ENCODE measurements at regions of chr9 and their contacts with region 1.

Region 1: DNA sequence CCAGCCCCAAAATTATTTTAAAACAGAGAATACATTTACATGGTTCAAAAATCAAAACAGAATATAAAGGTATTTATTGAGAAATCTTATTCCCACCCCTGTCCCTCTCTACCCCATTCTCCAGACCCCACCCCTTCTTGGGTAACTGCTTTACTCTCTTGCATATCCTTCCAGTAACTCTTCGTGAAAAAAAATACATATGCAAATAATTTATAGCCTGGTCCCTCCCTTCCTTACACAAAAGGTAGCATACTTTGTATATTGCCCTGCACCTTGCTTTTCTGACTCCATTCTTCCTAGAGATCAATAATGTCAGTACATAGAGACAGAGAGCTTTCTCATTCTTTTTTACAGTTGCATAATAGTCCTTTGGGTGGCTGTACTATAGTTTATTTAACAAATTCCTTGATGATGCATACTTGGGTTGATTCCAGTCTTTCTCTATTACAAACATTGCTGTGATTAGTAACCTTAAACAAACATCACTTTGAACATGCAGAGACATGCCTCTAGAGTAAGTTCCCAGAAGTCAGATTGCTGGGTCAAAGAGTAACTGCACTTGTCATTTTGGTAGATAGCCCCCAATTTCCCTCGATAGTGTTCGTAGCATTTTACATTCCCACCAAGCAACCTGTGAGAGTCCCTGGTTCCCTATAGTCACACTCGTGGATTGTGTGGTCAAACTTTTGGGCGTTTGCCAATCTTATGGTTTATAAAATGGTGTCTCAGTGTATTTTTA is 47.8 kb downstream of the STOM start:
- DNase-seq: peak in 2 of 9 experiments; percentile 13 to 18
- ATAC-seq: no peak
- H3K4me3 ChIP-seq: no peak overlapping the region
- H3K4me3 Mint-ChIP-seq: no peak overlapping the region
- H3K27ac ChIP-seq: no peak overlapping the region
- H3K27ac Mint-ChIP-seq: no peak overlapping the region
- H3K4me1 ChIP-seq: peaks cover 7% of the 10 kb centered on the region
- H3K4me1 Mint-ChIP-seq: peaks cover 21% of the 10 kb centered on the region
- H3K27me3 ChIP-seq: no peaks in the 10 kb centered on the region
- H3K27me3 Mint-ChIP-seq: no peaks in the 10 kb centered on the region
- CTCF ChIP-seq: no peak

Region 2: GRCh38 chr9:121133149-121133816 is 188.9 kb before region 1 on chr9:
- CTCF ChIA-PET with region 1: no interaction called
- POLR2A ChIA-PET with region 1: no interaction called
- intact Hi-C with region 1: no loop called
- DNase-seq: peak; percentile 62 to 91 (median 78)
- ATAC-seq: peak; percentile 99
- H3K4me3 ChIP-seq: peak overlapping the region; percentile 23 to 27
- H3K4me3 Mint-ChIP-seq: peak overlapping the region; percentile 65
- H3K27ac ChIP-seq: peak overlapping the region; percentile 4 to 64
- H3K27ac Mint-ChIP-seq: peak overlapping the region; percentile 85
- H3K4me1 ChIP-seq: peaks cover 20% of the 10 kb centered on the region
- H3K4me1 Mint-ChIP-seq: peaks cover 73% of the 10 kb centered on the region
- H3K27me3 ChIP-seq: no peaks in the 10 kb centered on the region
- H3K27me3 Mint-ChIP-seq: no peaks in the 10 kb centered on the region
- CTCF ChIP-seq: no peak

Region 3: GRCh38 chr9:121201738-121202533 is 120.3 kb before region 1 on chr9 and contains the start of gene RAB14:
- CTCF ChIA-PET with region 1: no interaction called
- POLR2A ChIA-PET with region 1: no interaction called
- intact Hi-C with region 1: no loop called
- DNase-seq: peak; percentile 100
- ATAC-seq: peak; percentile 90
- H3K4me3 ChIP-seq: peak within 1 kb of the TSS; percentile 77 to 79
- H3K4me3 Mint-ChIP-seq: peak within 1 kb of the TSS; percentile 96
- H3K27ac ChIP-seq: peak within 1 kb of the TSS; percentile 79 to 82
- H3K27ac Mint-ChIP-seq: peak within 1 kb of the TSS; percentile 97
- H3K4me1 ChIP-seq: peaks cover 41% of the 10 kb centered on the region
- H3K4me1 Mint-ChIP-seq: peaks cover 53% of the 10 kb centered on the region
- H3K27me3 ChIP-seq: no peaks in the 10 kb centered on the region
- H3K27me3 Mint-ChIP-seq: no peaks in the 10 kb centered on the region
- CTCF ChIP-seq: no peak
- total RNA-seq, gene RAB14: 58.8 to 60.4 TPM

Region 4: DNA sequence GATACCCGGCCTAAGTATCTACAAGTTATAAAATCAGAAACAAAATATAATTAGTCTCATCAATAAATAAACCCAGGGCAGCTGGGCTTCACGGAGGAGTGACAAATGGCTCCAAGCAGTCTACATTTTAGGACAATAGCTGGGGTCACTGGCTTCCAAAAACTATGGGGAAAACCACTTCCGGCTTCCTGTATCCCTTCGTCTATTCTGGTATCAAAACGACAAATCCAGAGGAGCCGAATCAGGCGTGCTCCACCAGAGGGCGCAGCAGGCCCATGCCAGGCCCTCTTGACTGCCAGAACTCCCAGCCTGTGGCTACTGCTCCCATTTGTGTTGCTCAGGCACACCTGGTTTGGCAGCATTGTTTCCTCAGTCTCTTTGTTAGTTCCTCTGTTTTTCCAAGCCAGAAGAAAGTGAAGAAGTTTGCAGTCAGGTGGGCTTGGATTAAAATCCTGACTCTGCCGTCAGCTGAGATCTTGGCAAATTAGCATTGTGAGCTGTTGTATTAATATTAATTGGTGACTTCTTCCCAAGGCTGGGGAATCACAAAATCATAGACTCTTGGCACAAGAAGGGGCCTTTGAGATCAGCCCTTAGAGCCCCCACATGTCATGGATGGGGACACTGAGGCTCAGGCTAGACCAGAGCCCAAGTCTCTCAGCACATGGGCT is 108.9 kb before region 1 on chr9:
- CTCF ChIA-PET with region 1: interaction called, 11 read pairs
- POLR2A ChIA-PET with region 1: no interaction called
- intact Hi-C with region 1: no loop called
- DNase-seq: peak; percentile 27 to 75 (median 62)
- ATAC-seq: peak; percentile 52
- H3K4me3 ChIP-seq: no peak overlapping the region
- H3K4me3 Mint-ChIP-seq: no peak overlapping the region
- H3K27ac ChIP-seq: no peak overlapping the region
- H3K27ac Mint-ChIP-seq: no peak overlapping the region
- H3K4me1 ChIP-seq: no peaks in the 10 kb centered on the region
- H3K4me1 Mint-ChIP-seq: peaks cover 5% of the 10 kb centered on the region
- H3K27me3 ChIP-seq: no peaks in the 10 kb centered on the region
- H3K27me3 Mint-ChIP-seq: no peaks in the 10 kb centered on the region
- CTCF ChIP-seq: peak; percentile 89

Region 5: GRCh38 chr9:121305269-121305994 is 16.8 kb before region 1 on chr9:
- CTCF ChIA-PET with region 1: interaction called, 58 read pairs
- POLR2A ChIA-PET with region 1: no interaction called
- intact Hi-C with region 1: no loop called
- DNase-seq: no peak
- ATAC-seq: no peak
- H3K4me3 ChIP-seq: no peak overlapping the region
- H3K4me3 Mint-ChIP-seq: no peak overlapping the region
- H3K27ac ChIP-seq: no peak overlapping the region
- H3K27ac Mint-ChIP-seq: no peak overlapping the region
- H3K4me1 ChIP-seq: peaks cover 1% of the 10 kb centered on the region
- H3K4me1 Mint-ChIP-seq: peaks cover 2% of the 10 kb centered on the region
- H3K27me3 ChIP-seq: no peaks in the 10 kb centered on the region
- H3K27me3 Mint-ChIP-seq: peaks cover 4% of the 10 kb centered on the region
- CTCF ChIP-seq: no peak

Region 6: DNA sequence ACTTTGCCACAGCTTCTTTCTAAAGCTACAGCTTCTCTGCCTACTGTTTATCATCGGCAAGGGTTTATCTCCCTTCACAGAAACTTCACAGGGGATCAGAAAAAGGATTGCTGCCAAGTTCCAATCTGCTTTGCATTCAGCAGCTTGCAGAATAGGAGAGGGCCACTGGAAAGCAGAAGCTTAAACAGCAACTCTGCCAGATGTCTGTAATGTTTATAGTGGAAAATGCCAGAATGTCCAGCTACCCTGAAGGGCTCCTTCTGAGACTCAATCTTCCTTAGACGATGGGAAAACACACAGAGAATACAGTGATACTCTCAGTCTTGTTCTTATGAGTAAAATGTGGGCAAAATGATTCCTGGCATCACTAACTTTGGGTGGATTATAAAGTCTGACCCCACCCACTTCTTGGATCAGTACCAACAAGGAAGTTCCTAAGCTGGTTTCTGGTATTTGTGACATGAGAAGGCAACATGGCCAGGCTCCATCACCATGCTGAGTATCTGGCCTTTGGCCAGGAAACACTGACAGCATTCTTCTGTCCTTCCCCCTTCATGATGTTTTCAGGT is 28.9 kb after region 1 on chr9:
- CTCF ChIA-PET with region 1: interaction called, 42 read pairs
- POLR2A ChIA-PET with region 1: no interaction called
- intact Hi-C with region 1: loop called in 1 of 2 experiments (anchors 1 kb)
- DNase-seq: no peak
- ATAC-seq: no peak
- H3K4me3 ChIP-seq: no peak overlapping the region
- H3K4me3 Mint-ChIP-seq: no peak overlapping the region
- H3K27ac ChIP-seq: no peak overlapping the region
- H3K27ac Mint-ChIP-seq: no peak overlapping the region
- H3K4me1 ChIP-seq: peaks cover 23% of the 10 kb centered on the region
- H3K4me1 Mint-ChIP-seq: peaks cover 37% of the 10 kb centered on the region
- H3K27me3 ChIP-seq: no peaks in the 10 kb centered on the region
- H3K27me3 Mint-ChIP-seq: no peaks in the 10 kb centered on the region
- CTCF ChIP-seq: no peak

Region 7: DNA sequence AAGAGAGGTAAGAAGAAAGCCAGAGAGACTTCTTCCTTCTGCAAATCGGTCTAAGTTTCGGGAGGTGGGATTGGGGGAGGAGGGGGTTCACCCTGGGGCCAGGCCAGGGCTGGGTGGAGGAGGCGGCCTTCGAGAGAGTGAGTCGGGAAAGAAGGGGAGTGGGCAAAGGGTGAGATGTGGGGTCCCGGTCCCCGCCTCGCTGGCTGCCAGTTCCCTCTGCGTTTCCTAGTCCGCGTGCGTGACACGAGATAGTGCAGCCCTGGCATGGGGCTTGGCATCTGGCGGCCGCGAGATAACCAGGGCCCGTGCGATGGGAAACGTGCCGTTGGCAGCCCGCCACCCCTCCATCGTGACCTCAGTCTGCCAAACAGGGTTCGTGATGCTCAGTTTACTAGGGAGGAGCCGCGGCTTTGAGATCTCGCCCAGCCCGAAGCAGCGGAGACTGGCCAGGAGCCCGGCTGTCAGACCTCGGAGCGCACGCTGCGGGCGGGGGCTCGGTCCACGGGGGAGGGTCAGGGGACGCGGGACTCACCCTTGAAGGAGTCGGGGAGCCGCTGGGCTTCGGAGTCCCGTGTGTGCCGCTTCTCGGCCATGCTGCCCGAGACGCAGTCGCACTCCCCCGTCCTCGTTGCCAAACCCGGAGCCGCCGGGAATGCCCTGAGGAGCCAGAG is 47.5 kb after region 1 on chr9 and contains the start of gene STOM:
- CTCF ChIA-PET with region 1: interaction called, 183 read pairs
- POLR2A ChIA-PET with region 1: no interaction called
- intact Hi-C with region 1: loop called in 1 of 2 experiments (anchors 1 kb)
- DNase-seq: peak in 8 of 9 experiments; percentile 35 to 87 (median 68)
- ATAC-seq: peak; percentile 53
- H3K4me3 ChIP-seq: peak within 1 kb of the TSS; percentile 86 to 96
- H3K4me3 Mint-ChIP-seq: peak within 1 kb of the TSS; percentile 92
- H3K27ac ChIP-seq: peak within 1 kb of the TSS; percentile 67 to 90
- H3K27ac Mint-ChIP-seq: peak within 1 kb of the TSS; percentile 90
- H3K4me1 ChIP-seq: peaks cover 11% of the 10 kb centered on the region
- H3K4me1 Mint-ChIP-seq: peaks cover 66% of the 10 kb centered on the region
- H3K27me3 ChIP-seq: no peaks in the 10 kb centered on the region
- H3K27me3 Mint-ChIP-seq: no peaks in the 10 kb centered on the region
- CTCF ChIP-seq: no peak
- total RNA-seq, gene STOM: 47.4 to 48.2 TPM

Region 8: GRCh38 chr9:121393318-121393717 is 71.1 kb after region 1 on chr9:
- CTCF ChIA-PET with region 1: interaction called, 382 read pairs
- POLR2A ChIA-PET with region 1: no interaction called
- intact Hi-C with region 1: no loop called
- DNase-seq: peak in 1 of 9 experiments; percentile 7
- ATAC-seq: no peak
- H3K4me3 ChIP-seq: no peak overlapping the region
- H3K4me3 Mint-ChIP-seq: no peak overlapping the region
- H3K27ac ChIP-seq: no peak overlapping the region
- H3K27ac Mint-ChIP-seq: no peak overlapping the region
- H3K4me1 ChIP-seq: peaks cover 5% of the 10 kb centered on the region
- H3K4me1 Mint-ChIP-seq: peaks cover 8% of the 10 kb centered on the region
- H3K27me3 ChIP-seq: no peaks in the 10 kb centered on the region
- H3K27me3 Mint-ChIP-seq: no peaks in the 10 kb centered on the region
- CTCF ChIP-seq: no peak

Measured in CD8-positive, alpha-beta T cell (primary cell).